CD8-positive, alpha-beta T cell (primary cell): ENCODE measurements at regions of chr14 and their contacts with region 1.

Region 1: DNA sequence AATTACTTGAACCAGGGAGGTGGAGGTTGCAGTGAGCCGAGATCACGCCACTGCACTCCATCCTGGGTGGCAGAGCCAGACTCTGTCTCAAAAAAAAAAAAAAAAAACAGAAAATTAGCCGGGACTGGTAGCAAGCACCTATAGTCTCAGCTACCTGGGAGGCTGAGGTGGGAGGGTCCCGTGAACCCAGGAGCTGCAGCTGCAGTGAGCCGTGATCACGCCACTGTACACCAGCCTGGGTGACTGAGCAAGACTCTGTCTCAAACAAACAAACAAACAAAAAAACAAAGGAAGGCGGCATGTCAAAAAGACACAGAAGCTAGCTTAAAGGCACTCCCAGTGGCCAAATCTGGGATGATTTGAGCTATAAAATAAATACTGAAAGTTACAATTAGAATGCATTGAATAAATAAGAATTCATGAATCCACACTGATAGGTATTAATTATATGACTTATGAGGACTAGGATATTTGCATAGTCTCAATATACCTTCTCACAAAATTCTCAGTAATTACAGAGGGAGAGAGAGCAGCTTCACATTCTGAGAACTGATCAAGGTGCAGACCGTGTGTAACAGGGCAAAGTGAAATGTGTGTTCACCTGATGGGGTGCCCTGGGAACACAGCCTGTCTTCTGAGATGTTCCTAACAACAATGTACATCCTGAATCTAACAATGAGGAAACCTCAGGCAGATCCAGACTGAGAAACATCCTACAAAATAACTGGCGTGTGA is 42.7 kb upstream of the GPR132 start:
- DNase-seq: no peak
- ATAC-seq: no peak
- H3K4me3 ChIP-seq: no peak overlapping the region
- H3K4me3 Mint-ChIP-seq: no peak overlapping the region
- H3K27ac ChIP-seq: no peak overlapping the region
- H3K27ac Mint-ChIP-seq: no peak overlapping the region
- H3K4me1 ChIP-seq: no peaks in the 10 kb centered on the region
- H3K4me1 Mint-ChIP-seq: no peaks in the 10 kb centered on the region
- H3K27me3 ChIP-seq: peaks cover 2 to 7% of the 10 kb centered on the region in 2 experiments
- H3K27me3 Mint-ChIP-seq: peaks cover 28% of the 10 kb centered on the region
- CTCF ChIP-seq: no peak

Region 2: DNA sequence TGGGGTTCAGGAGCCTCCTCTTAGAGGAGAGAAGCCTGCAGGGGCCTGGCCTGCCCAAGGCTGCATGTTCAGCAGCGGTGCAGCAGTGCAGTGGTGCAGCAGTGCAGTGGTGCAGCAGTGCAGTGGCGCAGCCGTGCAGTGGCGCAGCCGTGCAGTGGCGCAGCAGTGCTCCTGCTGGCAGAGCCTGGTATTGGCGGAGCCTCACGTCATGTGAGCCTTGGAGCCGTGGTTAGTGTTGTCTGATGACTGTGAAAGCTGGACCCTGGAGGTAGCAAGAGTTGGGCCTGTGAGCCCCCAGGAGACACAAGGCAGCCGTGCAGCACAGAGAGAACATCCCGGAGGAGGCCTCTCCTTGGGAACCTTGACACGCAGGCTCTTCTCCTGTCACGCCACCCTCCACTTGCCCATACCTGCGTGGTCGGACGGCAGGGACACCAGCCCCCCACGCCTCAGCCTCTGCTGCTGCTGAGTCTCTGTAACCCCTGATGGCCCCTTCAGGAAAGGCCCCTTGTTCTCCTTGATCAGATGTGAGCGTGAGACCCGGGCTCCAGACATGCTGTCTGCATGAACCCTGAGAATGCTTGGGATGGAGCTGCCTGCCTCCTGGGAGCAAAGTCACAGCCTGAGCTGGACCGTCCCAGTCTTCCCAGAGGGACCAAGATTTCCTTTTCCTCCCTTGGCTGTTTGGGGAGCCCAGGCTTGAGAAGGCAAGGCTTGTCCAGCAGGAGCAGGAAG is 775.9 kb before region 1 on chr14:
- CTCF ChIA-PET with region 1: no interaction called
- POLR2A ChIA-PET with region 1: no interaction called
- intact Hi-C with region 1: no loop called
- DNase-seq: peak in 1 of 9 experiments; percentile 35
- ATAC-seq: no peak
- H3K4me3 ChIP-seq: no peak overlapping the region
- H3K4me3 Mint-ChIP-seq: no peak overlapping the region
- H3K27ac ChIP-seq: no peak overlapping the region
- H3K27ac Mint-ChIP-seq: no peak overlapping the region
- H3K4me1 ChIP-seq: no peaks in the 10 kb centered on the region
- H3K4me1 Mint-ChIP-seq: no peaks in the 10 kb centered on the region
- H3K27me3 ChIP-seq: no peaks in the 10 kb centered on the region
- H3K27me3 Mint-ChIP-seq: no peaks in the 10 kb centered on the region
- CTCF ChIP-seq: no peak

Region 3: GRCh38 chr14:105517096-105517495 is 409.1 kb after region 1 on chr14:
- CTCF ChIA-PET with region 1: no interaction called
- POLR2A ChIA-PET with region 1: no interaction called
- intact Hi-C with region 1: loop called in 1 of 2 experiments (anchors 5 kb)
- DNase-seq: no peak
- ATAC-seq: no peak
- H3K4me3 ChIP-seq: no peak overlapping the region
- H3K4me3 Mint-ChIP-seq: no peak overlapping the region
- H3K27ac ChIP-seq: no peak overlapping the region
- H3K27ac Mint-ChIP-seq: no peak overlapping the region
- H3K4me1 ChIP-seq: no peaks in the 10 kb centered on the region
- H3K4me1 Mint-ChIP-seq: no peaks in the 10 kb centered on the region
- H3K27me3 ChIP-seq: peaks cover 0 to 16% of the 10 kb centered on the region in 2 experiments
- H3K27me3 Mint-ChIP-seq: peaks cover 41% of the 10 kb centered on the region
- CTCF ChIP-seq: no peak